CD4-positive, alpha-beta memory T cell (primary cell): ENCODE measurements at regions of chr4 and their contacts with region 1.

Region 1: DNA sequence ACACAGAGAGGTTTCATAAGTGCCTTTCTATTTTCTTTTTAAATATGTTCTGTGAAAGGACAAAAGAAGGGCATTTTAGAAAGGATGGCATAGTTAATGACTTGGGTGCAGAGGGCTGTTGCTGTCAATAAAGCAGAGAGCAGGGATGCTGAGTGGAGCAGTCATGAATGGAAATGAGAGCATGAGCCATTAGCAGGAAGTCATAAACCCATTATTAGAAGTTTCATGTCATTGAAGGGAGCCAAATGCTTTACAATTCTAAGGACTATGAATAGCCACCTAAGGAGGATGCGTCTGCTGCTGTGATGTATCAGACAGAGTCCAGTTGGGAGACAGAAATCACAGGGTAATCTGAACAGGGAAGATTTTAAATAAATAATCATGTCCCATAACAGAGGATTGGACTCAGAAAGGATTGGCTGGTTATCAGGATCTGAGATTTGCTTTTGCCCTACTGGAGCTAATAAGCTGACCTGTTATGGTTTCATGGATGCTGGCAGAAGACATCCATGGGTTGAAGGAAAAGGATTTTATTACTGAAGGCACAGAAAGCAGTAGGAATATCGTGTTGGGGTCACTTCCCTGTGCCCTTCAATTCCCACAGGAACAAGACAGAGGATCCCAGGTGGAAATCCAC is 47.5 kb upstream of the WDR19 start:
- DNase-seq: peak in 1 of 5 donors; percentile 5
- H3K4me3 ChIP-seq: no peak overlapping the region
- H3K4me3 Mint-ChIP-seq: no peak overlapping the region
- H3K27ac ChIP-seq: no peak overlapping the region
- H3K27ac Mint-ChIP-seq: peak overlapping the region in 4 of 7 donors; percentile 0 to 63 (median 45)
- H3K4me1 ChIP-seq: peaks cover 10% of the 10 kb centered on the region
- H3K4me1 Mint-ChIP-seq: peaks cover 9 to 12% (median 10%) of the 10 kb centered on the region in 4 donors
- H3K27me3 ChIP-seq: no peaks in the 10 kb centered on the region
- H3K27me3 Mint-ChIP-seq: no peaks in the 10 kb centered on the region

Region 2: DNA sequence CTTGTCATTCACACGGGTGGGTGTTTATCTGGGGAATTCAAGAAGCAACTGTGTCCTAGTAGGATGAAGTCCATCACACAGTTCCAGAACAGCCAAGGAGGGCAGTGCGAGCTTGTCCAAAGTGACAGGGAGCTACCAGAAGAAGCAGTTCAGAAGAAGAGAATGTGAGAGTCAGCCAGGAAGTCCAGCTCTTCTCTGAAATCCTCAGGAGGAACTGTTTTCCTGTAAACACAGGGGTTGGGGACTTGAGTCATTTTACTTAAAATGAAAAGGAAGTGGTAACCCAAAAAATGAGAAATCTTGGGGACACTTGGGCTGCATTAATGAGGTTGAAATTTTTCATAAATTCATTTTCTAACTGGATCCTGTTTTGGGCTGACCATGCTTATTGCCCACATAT is 343.8 kb before region 1 on chr4:
- CTCF ChIA-PET with region 1: no interaction called
- POLR2A ChIA-PET with region 1: no interaction called
- intact Hi-C with region 1: no loop called
- DNase-seq: no peak
- H3K4me3 ChIP-seq: no peak overlapping the region
- H3K4me3 Mint-ChIP-seq: no peak overlapping the region
- H3K27ac ChIP-seq: no peak overlapping the region
- H3K27ac Mint-ChIP-seq: no peak overlapping the region
- H3K4me1 ChIP-seq: no peaks in the 10 kb centered on the region
- H3K4me1 Mint-ChIP-seq: peaks cover 0 to 3% (median 0%) of the 10 kb centered on the region in 4 donors
- H3K27me3 ChIP-seq: no peaks in the 10 kb centered on the region
- H3K27me3 Mint-ChIP-seq: no peaks in the 10 kb centered on the region

Region 3: DNA sequence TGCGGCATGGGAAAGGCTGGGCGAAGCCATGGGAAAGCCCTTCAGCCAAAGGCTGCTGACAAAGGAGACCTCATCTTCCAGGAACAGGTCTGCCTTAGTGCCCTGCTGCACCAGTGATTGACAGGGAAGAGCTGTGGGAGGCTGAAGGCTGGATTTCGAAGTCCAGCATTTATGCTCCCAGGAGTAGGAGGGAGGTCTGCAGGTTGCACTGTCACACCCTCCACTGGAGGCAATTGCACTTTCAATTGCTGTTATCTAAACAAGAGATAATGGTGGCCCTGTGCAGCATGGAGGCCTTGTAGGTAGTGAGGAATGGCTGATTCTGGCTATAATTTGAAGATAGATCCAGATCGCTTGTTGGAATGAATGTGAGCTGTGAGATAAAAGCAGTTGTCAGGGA is 223.5 kb before region 1 on chr4:
- CTCF ChIA-PET with region 1: interaction called, 242 read pairs
- POLR2A ChIA-PET with region 1: no interaction called
- intact Hi-C with region 1: no loop called
- DNase-seq: no peak
- H3K4me3 ChIP-seq: no peak overlapping the region
- H3K4me3 Mint-ChIP-seq: no peak overlapping the region
- H3K27ac ChIP-seq: no peak overlapping the region
- H3K27ac Mint-ChIP-seq: no peak overlapping the region
- H3K4me1 ChIP-seq: peaks cover 10% of the 10 kb centered on the region
- H3K4me1 Mint-ChIP-seq: peaks cover 7 to 10% (median 8%) of the 10 kb centered on the region in 4 donors
- H3K27me3 ChIP-seq: no peaks in the 10 kb centered on the region
- H3K27me3 Mint-ChIP-seq: no peaks in the 10 kb centered on the region

Region 4: DNA sequence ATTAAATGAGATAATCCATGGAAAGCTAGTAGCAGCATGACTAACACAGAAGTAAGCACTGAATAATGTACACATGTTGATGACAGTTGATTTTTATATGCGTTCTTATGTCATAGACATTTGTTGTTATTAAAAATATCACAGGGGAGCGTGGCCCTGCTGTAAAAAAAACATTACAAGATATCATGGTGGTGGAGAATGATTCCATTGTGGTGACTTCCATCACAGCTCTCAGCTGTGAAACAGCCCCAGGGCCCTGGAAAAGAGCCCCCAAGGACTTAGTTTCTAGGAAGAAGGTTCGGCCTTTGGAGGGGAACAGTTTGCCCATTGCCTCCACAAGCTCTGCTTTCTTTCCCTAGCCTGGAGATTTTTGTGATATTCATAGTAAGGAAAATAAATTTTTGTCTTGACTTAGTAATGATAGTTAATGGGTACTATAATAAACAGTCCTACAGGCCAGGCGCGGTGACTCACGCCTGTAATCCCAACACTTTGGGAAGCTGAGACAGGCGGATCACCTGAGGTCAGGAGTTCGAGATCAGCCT is 217.2 kb before region 1 on chr4:
- CTCF ChIA-PET with region 1: interaction called, 10 read pairs
- POLR2A ChIA-PET with region 1: no interaction called
- intact Hi-C with region 1: no loop called
- DNase-seq: no peak
- H3K4me3 ChIP-seq: no peak overlapping the region
- H3K4me3 Mint-ChIP-seq: no peak overlapping the region
- H3K27ac ChIP-seq: no peak overlapping the region
- H3K27ac Mint-ChIP-seq: no peak overlapping the region
- H3K4me1 ChIP-seq: peaks cover 10% of the 10 kb centered on the region
- H3K4me1 Mint-ChIP-seq: peaks cover 9 to 13% (median 9%) of the 10 kb centered on the region in 4 donors
- H3K27me3 ChIP-seq: no peaks in the 10 kb centered on the region
- H3K27me3 Mint-ChIP-seq: no peaks in the 10 kb centered on the region

Region 5: DNA sequence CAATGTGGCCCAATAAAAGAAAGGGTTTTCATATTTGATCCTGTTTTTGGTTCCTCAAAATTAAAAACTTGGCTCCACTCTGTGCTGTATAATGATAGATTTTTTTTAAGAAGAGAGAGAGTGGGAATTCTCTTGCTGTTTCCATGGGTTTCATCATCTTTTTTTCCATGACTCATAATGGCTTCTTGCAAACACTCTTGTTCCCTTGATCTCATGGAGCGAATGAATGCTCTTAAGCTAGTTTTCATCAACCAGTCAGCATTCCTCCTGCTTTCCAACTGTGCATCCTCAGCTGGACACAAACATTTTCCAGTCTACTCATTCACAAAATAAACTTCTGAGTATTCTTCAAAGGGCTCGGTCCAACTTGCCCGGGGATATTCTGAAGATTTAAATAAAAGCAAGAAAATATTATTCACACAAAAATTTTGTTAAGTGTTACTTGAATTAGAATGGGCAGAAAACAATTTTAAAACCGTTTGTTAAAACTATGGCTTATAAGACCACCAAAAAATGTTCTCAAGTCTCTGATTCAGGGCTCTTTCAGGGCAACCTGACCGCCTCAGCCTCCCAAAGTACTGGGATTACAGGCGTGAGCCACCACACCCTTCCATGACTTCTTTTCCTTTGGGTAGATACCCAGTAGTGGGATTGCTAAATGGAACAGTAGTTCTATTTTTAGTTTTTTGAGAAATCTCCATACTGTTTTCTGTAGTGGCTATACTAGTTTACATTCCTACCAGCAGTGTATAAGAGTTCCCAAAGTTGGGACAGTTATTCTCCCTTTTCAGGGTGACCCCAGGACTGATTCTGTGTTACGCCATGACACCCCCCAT is 167.3 kb before region 1 on chr4:
- CTCF ChIA-PET with region 1: no interaction called
- POLR2A ChIA-PET with region 1: no interaction called
- intact Hi-C with region 1: no loop called
- DNase-seq: no peak
- H3K4me3 ChIP-seq: no peak overlapping the region
- H3K4me3 Mint-ChIP-seq: no peak overlapping the region
- H3K27ac ChIP-seq: no peak overlapping the region
- H3K27ac Mint-ChIP-seq: peak overlapping the region in 6 of 7 donors; percentile 18 to 85 (median 54)
- H3K4me1 ChIP-seq: no peaks in the 10 kb centered on the region
- H3K4me1 Mint-ChIP-seq: peaks cover 0 to 5% (median 4%) of the 10 kb centered on the region in 4 donors
- H3K27me3 ChIP-seq: no peaks in the 10 kb centered on the region
- H3K27me3 Mint-ChIP-seq: no peaks in the 10 kb centered on the region

Region 6: DNA sequence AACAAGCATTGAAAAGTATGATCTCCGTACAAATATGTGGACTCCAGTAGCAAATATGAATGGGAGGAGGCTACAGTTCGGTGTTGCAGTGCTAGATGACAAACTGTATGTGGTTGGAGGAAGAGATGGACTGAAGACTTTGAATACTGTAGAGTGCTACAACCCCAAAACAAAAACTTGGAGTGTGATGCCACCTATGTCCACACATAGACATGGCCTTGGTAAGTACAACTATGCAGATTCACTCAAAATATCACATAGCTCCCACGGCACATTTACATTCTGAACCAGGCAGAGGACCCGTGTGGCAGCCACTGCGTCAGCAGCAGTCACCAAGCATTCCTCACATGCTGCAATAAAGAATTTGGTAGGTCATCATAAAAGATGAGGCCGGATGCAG is 31.5 kb before region 1 on chr4:
- CTCF ChIA-PET with region 1: interaction called, 16 read pairs
- POLR2A ChIA-PET with region 1: no interaction called
- intact Hi-C with region 1: no loop called
- DNase-seq: no peak
- H3K4me3 ChIP-seq: no peak overlapping the region
- H3K4me3 Mint-ChIP-seq: no peak overlapping the region
- H3K27ac ChIP-seq: no peak overlapping the region
- H3K27ac Mint-ChIP-seq: peak overlapping the region in 2 of 7 donors; percentile 25 to 77
- H3K4me1 ChIP-seq: no peaks in the 10 kb centered on the region
- H3K4me1 Mint-ChIP-seq: peaks cover 0 to 9% (median 2%) of the 10 kb centered on the region in 4 donors
- H3K27me3 ChIP-seq: no peaks in the 10 kb centered on the region
- H3K27me3 Mint-ChIP-seq: no peaks in the 10 kb centered on the region

Region 7: DNA sequence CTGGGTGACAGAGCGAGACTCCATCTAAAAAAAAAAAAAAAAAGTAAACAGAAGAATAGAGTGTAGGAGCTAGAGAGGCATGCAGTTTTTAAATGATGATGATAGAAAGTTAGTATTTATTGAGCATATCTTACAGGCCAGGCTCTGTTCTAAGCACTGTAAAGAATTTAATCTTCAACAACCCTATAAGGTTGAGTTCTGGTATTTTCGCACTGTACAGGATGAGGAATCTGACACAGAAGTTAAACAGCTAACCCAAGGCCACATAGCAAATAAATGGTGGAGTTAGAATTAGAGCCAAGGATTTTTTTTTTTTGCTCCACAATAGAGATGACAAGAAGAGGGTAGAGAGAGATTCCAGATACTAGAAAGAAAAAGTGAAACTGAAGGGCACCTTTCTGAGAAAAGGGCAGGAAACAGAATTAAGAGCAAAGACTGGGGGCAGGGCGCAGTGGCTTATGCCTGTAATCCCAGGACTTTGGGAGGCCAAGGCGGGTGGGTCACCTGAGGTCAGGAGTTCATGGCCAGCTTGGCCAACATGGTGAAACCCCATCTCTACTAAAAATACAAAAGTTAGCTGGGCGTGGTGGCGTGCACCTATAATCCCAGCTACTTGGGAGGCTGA is 16.7 kb before region 1 on chr4:
- CTCF ChIA-PET with region 1: interaction called, 17 read pairs
- POLR2A ChIA-PET with region 1: interaction called, 3 read pairs
- intact Hi-C with region 1: no loop called
- DNase-seq: peak in 1 of 5 donors; percentile 12
- H3K4me3 ChIP-seq: no peak overlapping the region
- H3K4me3 Mint-ChIP-seq: peak overlapping the region in 7 of 8 donors; percentile 37 to 83 (median 72)
- H3K27ac ChIP-seq: no peak overlapping the region
- H3K27ac Mint-ChIP-seq: peak overlapping the region; percentile 36 to 92 (median 82)
- H3K4me1 ChIP-seq: peaks cover 21% of the 10 kb centered on the region
- H3K4me1 Mint-ChIP-seq: peaks cover 21 to 39% (median 24%) of the 10 kb centered on the region in 4 donors
- H3K27me3 ChIP-seq: no peaks in the 10 kb centered on the region
- H3K27me3 Mint-ChIP-seq: no peaks in the 10 kb centered on the region

Region 8: DNA sequence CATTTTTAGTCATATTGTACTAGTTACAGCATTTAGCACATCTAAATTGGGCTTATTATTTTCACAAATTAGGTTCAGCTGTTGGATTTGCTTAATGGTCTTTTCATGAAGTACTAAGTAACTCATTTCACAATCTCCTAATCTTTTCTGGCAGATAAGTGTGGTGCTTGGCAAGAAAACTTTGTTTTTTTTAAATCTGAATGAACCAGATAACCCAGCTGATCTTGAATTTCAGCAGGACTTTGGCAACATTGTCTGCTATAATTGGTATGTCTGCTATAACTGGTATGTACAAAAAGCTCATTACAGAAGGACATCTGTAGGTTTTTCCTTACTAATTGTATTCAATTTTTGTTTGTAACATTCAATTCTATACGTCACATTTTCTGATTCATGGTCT is 70.2 kb after region 1 on chr4:
- CTCF ChIA-PET with region 1: no interaction called
- POLR2A ChIA-PET with region 1: no interaction called
- intact Hi-C with region 1: no loop called
- DNase-seq: no peak
- H3K4me3 ChIP-seq: no peak overlapping the region
- H3K4me3 Mint-ChIP-seq: no peak overlapping the region
- H3K27ac ChIP-seq: no peak overlapping the region
- H3K27ac Mint-ChIP-seq: no peak overlapping the region
- H3K4me1 ChIP-seq: no peaks in the 10 kb centered on the region
- H3K4me1 Mint-ChIP-seq: no peaks in the 10 kb centered on the region
- H3K27me3 ChIP-seq: no peaks in the 10 kb centered on the region
- H3K27me3 Mint-ChIP-seq: no peaks in the 10 kb centered on the region